ENCODE measurements at regions of chr3 and their contacts with region 1.

Region 1: DNA sequence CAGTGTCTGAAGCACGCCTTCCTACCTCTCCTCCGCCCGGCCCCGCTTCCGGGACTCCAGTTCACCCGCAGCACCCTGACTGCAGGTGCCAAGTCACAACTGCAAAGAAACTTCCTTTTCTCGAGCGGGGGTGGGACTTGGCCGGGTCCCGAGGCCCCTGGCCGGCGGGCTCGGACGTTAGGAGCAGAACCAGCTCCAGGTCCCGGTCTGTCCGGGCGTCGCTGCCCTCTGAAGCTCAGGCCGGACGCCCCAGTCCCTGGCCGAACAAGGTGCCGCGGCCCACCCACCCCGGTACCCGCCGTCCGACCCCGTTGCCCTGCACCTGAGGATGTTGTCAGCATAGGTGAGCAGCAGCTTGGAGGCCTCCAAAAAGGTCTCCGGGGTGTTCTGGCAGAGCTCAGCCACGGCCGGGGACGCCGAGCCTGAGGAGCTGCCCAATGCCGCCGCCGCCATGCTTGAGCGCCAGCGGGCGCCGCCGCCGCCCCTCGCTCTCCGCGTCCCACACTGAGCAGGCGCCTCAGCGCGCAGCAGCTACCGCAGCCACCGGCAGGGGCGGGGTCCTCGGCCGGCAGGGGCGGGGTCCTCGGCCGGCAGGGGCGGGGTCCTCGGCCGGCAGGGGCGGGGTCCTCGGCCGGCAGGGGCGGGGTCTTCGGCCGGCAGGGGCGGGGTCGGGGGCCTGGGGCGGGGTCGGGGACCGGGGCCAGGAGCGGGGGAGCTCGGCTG is at the start of gene NGLY1:
- DNase-seq: peak; percentile 91
- H3K4me3 ChIP-seq: peak within 1 kb of the TSS; percentile 75 to 99 (median 95)
- H3K27ac ChIP-seq: peak within 1 kb of the TSS; percentile 86 to 91 (median 91)
- H3K4me1 ChIP-seq: peaks cover 0 to 29% (median 17%) of the 10 kb centered on the region in 4 donors
- H3K27me3 ChIP-seq: no peaks in the 10 kb centered on the region
- CTCF ChIP-seq: peak in 1 of 4 experiments; percentile 40
- EP300 ChIP-seq: no peak
- POLR2A ChIP-seq: peak; percentile 69 to 75
- total RNA-seq, gene NGLY1: 17.9 to 28.8 (median 26.0) TPM

Region 2: GRCh38 chr3:25664810-25665314 is 118.2 kb before region 1 on chr3 and contains the start of gene TOP2B:
- intact Hi-C with region 1: loop called (anchors 2 kb)
- DNase-seq: peak; percentile 98
- H3K4me3 ChIP-seq: peak within 1 kb of the TSS; percentile 78 to 92 (median 82)
- H3K27ac ChIP-seq: peak within 1 kb of the TSS; percentile 95 to 98 (median 96)
- H3K4me1 ChIP-seq: peaks cover 0 to 41% (median 33%) of the 10 kb centered on the region in 4 donors
- H3K27me3 ChIP-seq: no peaks in the 10 kb centered on the region
- CTCF ChIP-seq: no peak
- EP300 ChIP-seq: no peak
- POLR2A ChIP-seq: peak; percentile 81 to 86
- total RNA-seq, gene TOP2B: 89.5 to 122 (median 111) TPM

Region 3: DNA sequence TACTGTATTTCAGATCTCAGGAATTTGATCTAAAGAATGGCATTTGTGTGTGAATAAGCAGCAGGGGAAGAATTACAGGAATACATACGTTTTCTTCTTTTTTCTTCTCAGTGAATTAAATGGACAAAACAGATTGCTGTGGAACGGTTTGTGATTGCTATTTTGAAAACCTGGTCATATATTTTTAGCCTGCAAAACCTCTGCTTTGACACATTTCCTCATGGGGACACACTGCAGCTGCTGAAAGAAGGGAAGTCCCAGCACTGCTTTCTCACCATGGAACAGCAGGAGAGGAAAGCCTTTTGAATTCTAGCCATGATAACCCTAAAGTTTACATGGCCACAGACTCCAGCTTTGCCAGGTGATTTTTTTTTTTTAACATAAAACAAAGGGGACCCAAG is 321.8 kb after region 1 on chr3:
- intact Hi-C with region 1: no loop called
- DNase-seq: no peak
- H3K4me3 ChIP-seq: no peak overlapping the region
- H3K27ac ChIP-seq: peak overlapping the region; percentile 29 to 65 (median 46)
- H3K4me1 ChIP-seq: peaks cover 0 to 27% (median 11%) of the 10 kb centered on the region in 4 donors
- H3K27me3 ChIP-seq: no peaks in the 10 kb centered on the region
- CTCF ChIP-seq: no peak
- EP300 ChIP-seq: no peak
- POLR2A ChIP-seq: no peak